Left cardiac atrium (tissue), 4 donors: ENCODE measurements at regions of chr19 and their contacts with region 1.

Region 1: DNA sequence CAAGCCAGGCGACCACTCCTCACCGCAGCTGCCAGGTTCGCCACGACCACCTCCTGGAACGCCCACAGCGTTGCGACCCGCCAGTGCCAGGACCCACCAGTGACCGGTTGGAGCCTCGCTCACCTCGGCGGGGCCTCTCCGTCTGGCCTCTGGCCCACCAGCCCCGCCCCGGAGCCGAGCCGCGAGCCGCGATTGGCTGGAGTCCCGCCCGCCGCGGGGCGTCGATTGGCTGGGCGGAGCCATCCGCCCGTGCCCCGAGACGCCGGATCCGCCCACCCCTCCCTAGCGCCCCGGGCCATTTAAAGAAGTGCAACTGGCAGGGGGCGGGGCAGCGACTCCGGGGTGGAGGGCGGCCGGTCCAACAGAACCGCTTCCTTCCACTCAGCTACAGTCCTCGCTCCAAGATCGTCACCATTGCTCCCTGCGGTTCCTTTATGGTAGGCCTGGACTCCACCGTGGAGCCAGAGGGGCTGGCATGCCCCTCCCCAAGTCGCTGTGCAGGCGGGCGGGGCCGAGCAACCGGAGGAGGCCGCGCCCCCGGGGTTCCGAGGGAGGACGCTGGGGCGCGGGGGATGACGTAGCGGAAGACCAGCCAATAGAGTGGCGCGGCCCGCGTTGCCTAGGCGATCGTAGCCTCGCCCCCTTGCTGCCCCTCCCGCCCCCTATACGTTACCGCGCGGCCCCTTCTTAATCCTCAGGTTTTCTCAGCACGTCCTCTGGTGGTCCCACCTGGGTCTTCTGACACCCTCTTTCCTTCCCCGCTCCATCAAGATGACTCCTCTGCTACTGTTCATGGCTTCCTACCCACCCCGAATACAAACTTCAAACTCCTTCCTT is at the start of gene SERTAD3:
- DNase-seq: peak; percentile 98
- ATAC-seq: peak; percentile 87 to 88
- total RNA-seq, gene SERTAD3: 29.1 to 41.2 TPM

Region 2: GRCh38 chr19:40285353-40286234 is 158.8 kb before region 1 on chr19:
- intact Hi-C with region 1: loop called in 1 of 2 experiments (anchors 10 kb)
- DNase-seq: peak; percentile 99
- ATAC-seq: peak; percentile 94 to 97

Region 3: GRCh38 chr19:40425450-40426287 is 18.7 kb before region 1 on chr19 and contains the start of gene SERTAD1:
- intact Hi-C with region 1: loop called in 1 of 2 experiments (anchors 2 kb)
- DNase-seq: peak; percentile 100
- ATAC-seq: peak; percentile 93 to 95
- total RNA-seq, gene SERTAD1: 9.4 to 17.0 TPM

Region 4: GRCh38 chr19:40542202-40542859 is 97.9 kb after region 1 on chr19:
- intact Hi-C with region 1: no loop called
- DNase-seq: peak; percentile 59
- ATAC-seq: peak; percentile 86

Region 5: DNA sequence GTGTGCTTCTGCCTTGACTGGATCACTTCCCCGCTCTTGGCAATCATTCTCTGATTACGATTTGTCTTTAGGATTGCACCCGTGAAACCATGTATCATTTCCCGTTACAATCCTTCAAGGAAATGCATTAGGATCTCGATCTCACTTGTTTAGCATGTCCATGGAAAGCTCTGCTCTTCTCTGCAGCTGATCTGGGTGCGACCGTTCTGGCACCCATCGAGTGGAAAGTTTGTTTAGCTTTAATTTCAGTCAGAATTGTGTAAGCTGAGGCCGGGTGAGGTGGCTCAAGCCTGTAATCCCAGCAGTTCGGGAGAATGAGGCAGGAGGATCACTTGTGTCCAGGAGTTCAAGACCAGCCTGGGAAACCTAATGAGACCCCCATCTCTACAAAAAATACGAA is 215.2 kb after region 1 on chr19:
- intact Hi-C with region 1: no loop called
- DNase-seq: no peak
- ATAC-seq: no peak